HEK293 (cell line): ENCODE measurements at regions of chr4 and their contacts with region 1.

Region 1: GRCh38 chr4:15457406-15458201 is 12.1 kb upstream of the CC2D2A start:
- H3K4me3 ChIP-seq: no peak overlapping the region
- H3K27ac ChIP-seq: no peak overlapping the region
- H3K4me1 ChIP-seq: no peaks in the 10 kb centered on the region
- CTCF ChIP-seq: no peak

Region 2: DNA sequence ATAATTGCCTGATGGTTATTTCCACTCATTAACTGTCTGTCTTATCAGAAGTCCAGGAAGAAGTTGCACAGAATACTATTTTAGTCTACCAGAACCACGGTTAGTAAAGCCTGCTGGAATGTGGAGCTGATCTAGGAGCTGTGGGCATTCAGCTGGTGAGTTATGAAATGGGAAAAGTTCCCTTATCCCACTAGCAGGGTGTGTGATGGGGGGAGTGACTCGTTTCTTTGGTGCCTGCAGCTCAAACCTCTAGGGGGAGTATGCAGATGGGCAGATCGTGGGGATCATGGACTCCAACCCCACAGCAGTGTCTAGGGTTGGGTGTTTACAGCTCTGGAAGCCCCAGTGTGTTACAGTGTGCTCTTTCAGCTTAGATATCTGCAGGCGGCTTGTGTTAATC is 1524.4 kb before region 1 on chr4:
- CTCF ChIA-PET with region 1: interaction called, 10 read pairs
- POLR2A ChIA-PET with region 1: no interaction called
- H3K4me3 ChIP-seq: no peak overlapping the region
- H3K27ac ChIP-seq: no peak overlapping the region
- H3K4me1 ChIP-seq: no peaks in the 10 kb centered on the region
- CTCF ChIP-seq: no peak

Region 3: DNA sequence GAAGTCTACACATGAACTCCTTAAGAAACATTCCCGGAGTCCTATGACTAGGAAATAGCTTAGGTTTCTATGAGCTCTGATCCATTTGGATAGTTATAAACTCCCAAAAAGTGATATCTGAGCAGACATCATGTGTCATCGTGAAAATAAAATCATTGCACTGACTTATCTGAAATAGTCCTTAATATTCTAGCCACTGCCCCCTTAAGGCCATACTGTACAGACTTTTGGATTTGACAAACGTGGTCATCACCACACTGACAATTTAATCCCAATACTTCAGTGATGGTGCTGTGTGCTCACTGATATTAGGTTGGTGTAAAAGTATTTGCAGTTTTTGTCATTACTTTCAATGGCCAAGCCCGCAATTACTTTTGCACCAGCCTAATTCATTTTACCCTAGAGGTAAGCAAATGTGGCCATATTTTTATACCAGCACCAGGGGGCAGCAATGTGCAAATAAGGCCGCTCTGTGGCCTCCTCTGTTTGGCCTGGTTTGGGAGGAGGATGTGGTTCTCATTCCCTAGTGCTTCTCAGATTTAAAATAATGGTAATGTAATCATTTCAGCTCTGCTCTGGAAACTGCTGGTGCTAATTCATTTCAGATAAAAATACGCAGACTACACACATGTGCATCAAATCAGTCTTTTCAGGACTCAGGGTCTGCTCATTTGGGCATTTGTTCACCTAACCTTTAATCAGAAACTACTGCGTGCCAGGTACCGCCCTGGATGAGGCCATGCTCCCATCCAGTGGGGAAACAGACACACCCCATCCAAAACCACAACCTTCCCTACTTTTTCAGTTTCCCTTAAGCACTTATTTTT is 226.1 kb before region 1 on chr4:
- CTCF ChIA-PET with region 1: interaction called, 11 read pairs
- POLR2A ChIA-PET with region 1: no interaction called
- H3K4me3 ChIP-seq: no peak overlapping the region
- H3K27ac ChIP-seq: no peak overlapping the region
- H3K4me1 ChIP-seq: no peaks in the 10 kb centered on the region
- CTCF ChIP-seq: no peak

Region 4: DNA sequence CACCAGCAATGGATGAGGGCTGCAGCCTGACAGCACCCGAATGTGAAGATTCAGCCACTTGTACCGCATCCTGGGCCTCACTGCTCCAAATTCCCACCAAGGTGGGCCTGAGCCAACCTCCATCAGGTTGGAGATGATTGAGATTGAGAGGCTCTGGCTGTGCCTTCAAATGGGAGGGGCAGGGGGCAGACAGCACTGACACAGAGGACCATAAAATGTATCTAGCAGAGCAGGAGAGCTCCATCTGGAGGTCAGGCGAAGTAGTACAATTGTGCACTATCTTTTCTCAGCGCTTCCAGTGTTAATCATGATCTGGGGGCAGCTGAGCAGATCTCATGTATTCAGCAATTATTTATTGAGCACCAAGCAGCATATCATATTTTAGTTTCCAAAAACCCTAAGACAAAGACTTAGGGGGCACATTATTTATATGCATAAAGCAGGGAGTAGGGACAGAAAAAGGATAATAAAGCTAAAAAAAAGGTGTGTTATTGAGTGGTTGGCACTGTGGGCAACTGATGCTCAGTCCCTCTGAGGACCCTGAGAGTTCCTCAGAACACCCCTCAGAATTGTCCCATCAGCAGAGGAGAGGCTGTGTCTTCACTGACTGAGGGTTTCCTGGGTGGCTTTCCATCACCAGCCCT is 61.3 kb before region 1 on chr4:
- CTCF ChIA-PET with region 1: interaction called, 27 read pairs
- POLR2A ChIA-PET with region 1: no interaction called
- H3K4me3 ChIP-seq: no peak overlapping the region
- H3K27ac ChIP-seq: no peak overlapping the region
- H3K4me1 ChIP-seq: no peaks in the 10 kb centered on the region
- CTCF ChIP-seq: 0 out of 2 replicates have a peak, but pooled peaks have one; percentile 36

Region 5: DNA sequence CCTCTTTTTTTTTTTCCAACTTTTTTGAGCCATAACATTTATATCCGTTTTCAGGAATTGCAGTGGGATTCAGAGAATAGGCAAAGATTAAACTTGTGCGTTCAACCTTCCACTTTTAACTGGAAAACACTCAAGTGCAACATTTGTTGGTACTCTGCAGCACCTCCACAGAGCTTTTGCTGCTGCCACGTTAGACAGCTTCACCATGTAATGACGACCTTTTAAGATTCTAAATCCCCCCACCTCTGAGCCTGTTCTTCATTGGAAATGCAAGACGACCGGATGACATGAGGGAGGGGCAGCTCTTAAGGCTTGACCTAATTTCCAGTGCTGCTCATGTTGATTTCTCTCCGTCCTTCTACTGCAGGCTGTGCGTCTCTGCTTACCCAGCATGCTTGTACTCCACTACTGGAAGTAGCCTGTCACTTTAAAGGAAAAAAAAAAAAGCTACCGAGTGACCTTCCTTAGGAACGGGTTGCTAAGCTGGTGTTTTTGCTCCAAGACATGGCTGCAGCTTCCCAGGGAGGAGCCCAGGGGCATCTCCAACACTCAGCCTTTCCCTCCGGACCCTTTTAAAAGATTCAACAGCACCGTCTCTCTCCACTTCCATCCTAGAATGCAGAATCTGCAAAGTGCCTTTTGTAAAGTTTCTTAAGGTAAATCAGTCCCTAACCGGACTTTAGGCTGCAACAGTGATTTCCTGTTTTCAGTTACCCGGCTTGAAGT is 12.0 kb after region 1 on chr4 and contains the start of gene CC2D2A:
- CTCF ChIA-PET with region 1: interaction called, 22 read pairs
- POLR2A ChIA-PET with region 1: no interaction called
- H3K4me3 ChIP-seq: peak within 1 kb of the TSS; percentile 37
- H3K27ac ChIP-seq: no peak within 1 kb of the TSS
- H3K4me1 ChIP-seq: no peaks in the 10 kb centered on the region
- CTCF ChIP-seq: no peak

Region 6: GRCh38 chr4:15587649-15588048 is 130.0 kb after region 1 on chr4:
- CTCF ChIA-PET with region 1: no interaction called
- POLR2A ChIA-PET with region 1: no interaction called
- H3K4me3 ChIP-seq: no peak overlapping the region
- H3K27ac ChIP-seq: no peak overlapping the region
- H3K4me1 ChIP-seq: no peaks in the 10 kb centered on the region
- CTCF ChIP-seq: no peak